ENCODE measurements at regions of chr9 and their contacts with region 1.

Region 1: GRCh38 chr9:18208154-18209059 is 265.5 kb upstream of the ADAMTSL1 start:
- DNase-seq: peak; percentile 55

Region 2: DNA sequence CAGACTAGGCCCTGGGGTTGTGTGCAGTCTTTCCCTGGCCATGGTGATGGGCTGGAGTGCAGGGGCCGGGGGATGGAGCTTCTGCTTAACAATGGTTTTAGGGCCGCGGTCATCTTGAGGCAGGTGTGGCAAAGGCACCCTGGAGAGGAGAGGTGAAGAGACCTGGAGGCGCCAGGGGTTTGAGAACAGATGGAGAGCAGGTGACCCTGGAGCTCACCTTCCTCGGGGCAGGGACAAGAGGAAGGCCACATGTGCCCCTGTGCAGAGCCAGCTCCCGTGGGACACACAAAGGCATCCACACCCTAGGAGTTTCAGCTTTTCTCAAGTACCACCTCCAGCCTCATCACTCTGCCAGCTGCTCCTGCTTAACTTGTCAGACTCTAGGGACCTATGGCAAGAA is 675.9 kb before region 1 on chr9:
- CTCF ChIA-PET with region 1: interaction called, 10 read pairs
- POLR2A ChIA-PET with region 1: no interaction called
- DNase-seq: no peak

Region 3: GRCh38 chr9:17810728-17811571 is 397.5 kb before region 1 on chr9:
- CTCF ChIA-PET with region 1: interaction called, 22 read pairs
- POLR2A ChIA-PET with region 1: no interaction called
- DNase-seq: peak; percentile 19